ENCODE measurements at regions of chr7 and their contacts with region 1.

Region 1: GRCh38 chr7:129163875-129164544 is 19.5 kb downstream of the TSPAN33 start:
- DNase-seq: no peak
- ATAC-seq: peak in 2 of 4 donors; percentile 44 to 64
- H3K4me3 ChIP-seq: no peak overlapping the region
- H3K27ac ChIP-seq: no peak overlapping the region
- H3K4me1 ChIP-seq: no peaks in the 10 kb centered on the region
- H3K27me3 ChIP-seq: no peaks in the 10 kb centered on the region
- CTCF ChIP-seq: peak; percentile 88

Region 2: GRCh38 chr7:129210256-129210988 is 46.4 kb after region 1 on chr7:
- intact Hi-C with region 1: loop called (anchors 1 to 2 kb)
- DNase-seq: peak; percentile 81 to 91
- ATAC-seq: peak; percentile 87 to 98 (median 94)
- H3K4me3 ChIP-seq: no peak overlapping the region
- H3K27ac ChIP-seq: no peak overlapping the region
- H3K4me1 ChIP-seq: no peaks in the 10 kb centered on the region
- H3K27me3 ChIP-seq: no peaks in the 10 kb centered on the region
- CTCF ChIP-seq: peak; percentile 90

Measured in psoas muscle (tissue), 8 donors.